Aorta (tissue), 5 donors: ENCODE measurements at regions of chr4 and their contacts with region 1.

Region 1: GRCh38 chr4:1856042-1856788 is at the start of gene LETM1:
- DNase-seq: peak; percentile 98
- ATAC-seq: peak; percentile 97
- H3K4me3 ChIP-seq: peak within 1 kb of the TSS; percentile 71 to 74
- H3K27ac ChIP-seq: peak within 1 kb of the TSS in 1 of 2 donors; percentile 34
- H3K4me1 ChIP-seq: no peaks in the 10 kb centered on the region
- H3K27me3 ChIP-seq: no peaks in the 10 kb centered on the region
- total RNA-seq, gene LETM1: 25.3 to 25.6 TPM

Region 2: GRCh38 chr4:1870578-1871443 is 14.6 kb after region 1 on chr4 and contains the start of gene NSD2:
- intact Hi-C with region 1: loop called (anchors 2 kb)
- DNase-seq: peak; percentile 92 to 97
- ATAC-seq: peak; percentile 92
- H3K4me3 ChIP-seq: peak within 1 kb of the TSS; percentile 87 to 100
- H3K27ac ChIP-seq: peak within 1 kb of the TSS; percentile 33 to 95
- H3K4me1 ChIP-seq: no peaks in the 10 kb centered on the region
- H3K27me3 ChIP-seq: no peaks in the 10 kb centered on the region
- total RNA-seq, gene NSD2: 47.2 to 56.6 TPM

Region 3: DNA sequence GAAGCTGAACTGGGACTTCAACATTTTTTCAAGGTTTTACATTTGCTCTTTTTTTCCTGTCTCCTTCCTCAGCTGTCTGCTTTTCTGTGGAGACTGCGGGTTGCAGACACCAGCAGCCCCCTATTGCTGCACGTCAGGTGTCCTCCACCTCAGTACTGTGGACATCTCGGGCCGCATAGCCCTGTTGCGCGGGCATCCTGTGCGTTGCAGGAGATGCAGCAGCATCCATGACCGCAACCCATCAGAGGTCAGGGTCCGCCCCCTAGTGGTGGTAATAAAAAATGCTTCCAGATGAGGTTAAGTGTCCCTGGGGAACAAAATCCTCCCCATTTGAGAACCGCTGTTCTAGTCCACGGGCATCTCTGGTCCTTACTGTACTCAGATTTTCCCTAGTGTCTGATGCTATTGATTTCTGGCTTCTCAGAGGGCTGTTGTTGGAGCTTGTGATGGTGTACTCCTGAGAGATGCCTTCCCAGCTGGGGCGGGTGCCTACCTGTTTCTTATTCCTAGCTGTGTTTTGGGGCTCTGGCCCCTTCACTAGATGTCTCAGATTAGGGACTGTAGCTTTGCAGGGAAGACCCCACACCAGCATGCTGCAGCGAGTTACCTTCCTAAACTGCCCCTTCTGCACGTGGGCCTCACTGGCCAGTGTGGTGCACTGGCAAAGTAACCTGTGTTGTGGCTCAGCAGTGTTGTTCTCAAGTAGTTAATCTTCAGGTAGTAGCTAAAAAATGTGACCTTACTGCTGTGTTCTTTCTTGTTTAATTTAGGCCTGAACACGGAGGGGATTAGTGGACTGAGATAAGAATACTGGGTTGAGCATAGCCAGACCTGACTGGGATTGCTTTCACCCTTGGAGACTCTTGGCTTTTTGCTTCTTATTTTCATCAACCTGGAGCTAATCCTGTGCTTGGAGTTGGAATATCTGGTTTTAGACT is 43.2 kb after region 1 on chr4:
- intact Hi-C with region 1: loop called (anchors 5 kb)
- DNase-seq: peak; percentile 75 to 87
- ATAC-seq: peak; percentile 77
- H3K4me3 ChIP-seq: no peak overlapping the region
- H3K27ac ChIP-seq: no peak overlapping the region
- H3K4me1 ChIP-seq: no peaks in the 10 kb centered on the region
- H3K27me3 ChIP-seq: no peaks in the 10 kb centered on the region

Region 4: GRCh38 chr4:1939664-1940509 is 83.7 kb after region 1 on chr4:
- intact Hi-C with region 1: no loop called
- DNase-seq: no peak
- ATAC-seq: no peak
- H3K4me3 ChIP-seq: no peak overlapping the region
- H3K27ac ChIP-seq: no peak overlapping the region
- H3K4me1 ChIP-seq: no peaks in the 10 kb centered on the region
- H3K27me3 ChIP-seq: no peaks in the 10 kb centered on the region

Region 5: GRCh38 chr4:2008875-2009703 is 152.9 kb after region 1 on chr4 and contains the start of gene NELFA:
- intact Hi-C with region 1: loop called in 1 of 2 experiments (anchors 10 kb)
- DNase-seq: peak; percentile 97 to 98
- ATAC-seq: peak; percentile 99
- H3K4me3 ChIP-seq: peak within 1 kb of the TSS; percentile 68 to 69
- H3K27ac ChIP-seq: peak within 1 kb of the TSS; percentile 74 to 89
- H3K4me1 ChIP-seq: peaks cover 0 to 2% of the 10 kb centered on the region in 2 donors
- H3K27me3 ChIP-seq: no peaks in the 10 kb centered on the region
- total RNA-seq, gene NELFA: 17.7 to 27.4 TPM